H1 (cell line): ENCODE measurements at regions of chr4 and their contacts with region 1.

Region 1: GRCh38 chr4:173752610-173753230 is 222.7 kb upstream of the HAND2 start:
- DNase-seq: peak; percentile 44 to 89
- H3K4me3 ChIP-seq: no peak overlapping the region
- H3K27ac ChIP-seq: no peak overlapping the region
- H3K4me1 ChIP-seq: no peaks in the 10 kb centered on the region
- H3K27me3 ChIP-seq: no peaks in the 10 kb centered on the region
- CTCF ChIP-seq: peak; percentile 67 to 88 (median 80)
- EP300 ChIP-seq: no peak
- POLR2A ChIP-seq: no peak
- RAD21 ChIP-seq: peak; percentile 76 to 83

Region 2: DNA sequence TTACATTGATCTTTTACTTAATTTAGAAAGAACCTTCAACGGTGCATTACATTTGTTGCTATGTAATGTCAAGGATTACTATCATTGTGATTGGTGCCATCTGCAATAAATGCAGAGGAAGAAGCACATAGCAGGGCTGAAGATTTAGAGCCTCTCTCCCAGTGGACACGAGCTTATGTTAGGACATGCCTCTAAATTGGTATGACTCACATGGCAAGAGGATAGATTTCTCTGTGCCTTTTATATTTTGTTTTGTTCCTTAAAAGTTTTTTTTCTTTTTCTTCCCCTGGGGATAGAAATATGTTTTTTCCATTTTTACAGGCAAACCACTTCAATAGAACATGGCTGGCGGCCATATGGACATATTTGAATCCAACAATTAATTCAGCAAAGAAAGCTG is 17.7 kb before region 1 on chr4:
- CTCF ChIA-PET with region 1: interaction called, 15 read pairs
- POLR2A ChIA-PET with region 1: no interaction called
- DNase-seq: no peak
- H3K4me3 ChIP-seq: no peak overlapping the region
- H3K27ac ChIP-seq: no peak overlapping the region
- H3K4me1 ChIP-seq: no peaks in the 10 kb centered on the region
- H3K27me3 ChIP-seq: no peaks in the 10 kb centered on the region
- CTCF ChIP-seq: no peak
- EP300 ChIP-seq: no peak
- POLR2A ChIP-seq: no peak
- RAD21 ChIP-seq: no peak

Region 3: DNA sequence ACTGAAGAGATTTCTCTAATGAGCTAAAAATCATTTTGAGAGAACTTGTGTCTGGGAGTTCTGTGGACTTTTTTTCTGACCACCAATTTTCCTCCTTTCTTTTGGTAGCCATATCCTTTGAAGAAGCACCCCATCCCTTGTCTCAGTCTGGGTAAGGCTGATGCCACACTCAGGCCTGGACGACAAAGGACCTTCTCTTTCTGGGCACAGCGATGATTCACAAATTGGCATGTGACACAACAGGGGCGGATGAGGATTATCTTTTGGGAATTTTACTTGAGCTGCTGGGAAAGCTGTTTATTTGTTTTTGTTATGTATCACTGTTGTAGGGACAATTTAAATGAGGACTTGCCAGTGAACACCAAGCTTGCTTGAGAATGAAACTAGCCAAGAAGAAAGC is 10.7 kb after region 1 on chr4:
- CTCF ChIA-PET with region 1: interaction called, 17 read pairs
- POLR2A ChIA-PET with region 1: no interaction called
- DNase-seq: no peak
- H3K4me3 ChIP-seq: no peak overlapping the region
- H3K27ac ChIP-seq: no peak overlapping the region
- H3K4me1 ChIP-seq: no peaks in the 10 kb centered on the region
- H3K27me3 ChIP-seq: no peaks in the 10 kb centered on the region
- CTCF ChIP-seq: no peak
- EP300 ChIP-seq: no peak
- POLR2A ChIP-seq: no peak
- RAD21 ChIP-seq: no peak